CD4-positive, alpha-beta memory T cell (primary cell): ENCODE measurements at regions of chr2 and their contacts with region 1.

Region 1: GRCh38 chr2:29014811-29015421 is 33.8 kb downstream of the TOGARAM2 start:
- DNase-seq: peak; percentile 75 to 88 (median 80)
- H3K4me3 ChIP-seq: peak overlapping the region; percentile 25 to 48
- H3K4me3 Mint-ChIP-seq: peak overlapping the region; percentile 83 to 95 (median 88)
- H3K27ac ChIP-seq: peak overlapping the region; percentile 86
- H3K27ac Mint-ChIP-seq: peak overlapping the region; percentile 99 to 100 (median 100)
- H3K4me1 ChIP-seq: peaks cover 78% of the 10 kb centered on the region
- H3K4me1 Mint-ChIP-seq: peaks cover 62 to 84% (median 72%) of the 10 kb centered on the region in 4 donors
- H3K27me3 ChIP-seq: no peaks in the 10 kb centered on the region
- H3K27me3 Mint-ChIP-seq: no peaks in the 10 kb centered on the region

Region 2: GRCh38 chr2:28810384-28811285 is 204.3 kb before region 1 on chr2 and contains the start of gene SPDYA:
- CTCF ChIA-PET with region 1: no interaction called
- POLR2A ChIA-PET with region 1: no interaction called
- intact Hi-C with region 1: loop called (anchors 10 kb)
- DNase-seq: peak; percentile 76 to 81 (median 79)
- H3K4me3 ChIP-seq: peak within 1 kb of the TSS in 1 of 2 donors; percentile 60
- H3K4me3 Mint-ChIP-seq: peak within 1 kb of the TSS; percentile 79 to 91 (median 84)
- H3K27ac ChIP-seq: peak within 1 kb of the TSS; percentile 41
- H3K27ac Mint-ChIP-seq: peak within 1 kb of the TSS; percentile 73 to 88 (median 84)
- H3K4me1 ChIP-seq: peaks cover 13% of the 10 kb centered on the region
- H3K4me1 Mint-ChIP-seq: peaks cover 5 to 16% (median 11%) of the 10 kb centered on the region in 4 donors
- H3K27me3 ChIP-seq: no peaks in the 10 kb centered on the region
- H3K27me3 Mint-ChIP-seq: no peaks in the 10 kb centered on the region
- total RNA-seq, gene SPDYA: 4.5 to 4.9 TPM

Region 3: GRCh38 chr2:28894470-28895177 is 120.3 kb before region 1 on chr2 and contains the start of gene WDR43:
- CTCF ChIA-PET with region 1: no interaction called
- POLR2A ChIA-PET with region 1: interaction called, 13 read pairs
- intact Hi-C with region 1: loop called (anchors 10 kb)
- DNase-seq: peak; percentile 97 to 99 (median 98)
- H3K4me3 ChIP-seq: peak within 1 kb of the TSS; percentile 75 to 91
- H3K4me3 Mint-ChIP-seq: peak within 1 kb of the TSS; percentile 91 to 100 (median 96)
- H3K27ac ChIP-seq: peak within 1 kb of the TSS; percentile 83
- H3K27ac Mint-ChIP-seq: peak within 1 kb of the TSS; percentile 88 to 99 (median 95)
- H3K4me1 ChIP-seq: peaks cover 43% of the 10 kb centered on the region
- H3K4me1 Mint-ChIP-seq: peaks cover 33 to 50% (median 40%) of the 10 kb centered on the region in 4 donors
- H3K27me3 ChIP-seq: no peaks in the 10 kb centered on the region
- H3K27me3 Mint-ChIP-seq: peaks cover 0 to 2% of the 10 kb centered on the region in 2 donors
- total RNA-seq, gene WDR43: 52.9 to 57.5 TPM

Region 4: GRCh38 chr2:29000481-29000880 is 14.4 kb before region 1 on chr2:
- CTCF ChIA-PET with region 1: interaction called, 76 read pairs
- POLR2A ChIA-PET with region 1: interaction called, 164 read pairs
- intact Hi-C with region 1: loop called (anchors 2 kb)
- DNase-seq: peak; percentile 59 to 71 (median 65)
- H3K4me3 ChIP-seq: no peak overlapping the region
- H3K4me3 Mint-ChIP-seq: peak overlapping the region in 7 of 8 donors; percentile 43 to 83 (median 64)
- H3K27ac ChIP-seq: no peak overlapping the region
- H3K27ac Mint-ChIP-seq: peak overlapping the region; percentile 81 to 99 (median 92)
- H3K4me1 ChIP-seq: peaks cover 23% of the 10 kb centered on the region
- H3K4me1 Mint-ChIP-seq: peaks cover 16 to 36% (median 27%) of the 10 kb centered on the region in 4 donors
- H3K27me3 ChIP-seq: no peaks in the 10 kb centered on the region
- H3K27me3 Mint-ChIP-seq: no peaks in the 10 kb centered on the region

Region 5: GRCh38 chr2:29115797-29116781 is 101.2 kb after region 1 on chr2:
- CTCF ChIA-PET with region 1: interaction called, 14 read pairs
- POLR2A ChIA-PET with region 1: interaction called, 209 read pairs
- intact Hi-C with region 1: loop called (anchors 1 kb)
- DNase-seq: peak; percentile 74 to 90 (median 78)
- H3K4me3 ChIP-seq: peak overlapping the region; percentile 83 to 88
- H3K4me3 Mint-ChIP-seq: peak overlapping the region; percentile 86 to 97 (median 94)
- H3K27ac ChIP-seq: peak overlapping the region; percentile 78
- H3K27ac Mint-ChIP-seq: peak overlapping the region; percentile 93 to 98 (median 96)
- H3K4me1 ChIP-seq: peaks cover 43% of the 10 kb centered on the region
- H3K4me1 Mint-ChIP-seq: peaks cover 33 to 60% (median 44%) of the 10 kb centered on the region in 4 donors
- H3K27me3 ChIP-seq: no peaks in the 10 kb centered on the region
- H3K27me3 Mint-ChIP-seq: no peaks in the 10 kb centered on the region